ENCODE measurements at regions of chr16 and their contacts with region 1.

Region 1: DNA sequence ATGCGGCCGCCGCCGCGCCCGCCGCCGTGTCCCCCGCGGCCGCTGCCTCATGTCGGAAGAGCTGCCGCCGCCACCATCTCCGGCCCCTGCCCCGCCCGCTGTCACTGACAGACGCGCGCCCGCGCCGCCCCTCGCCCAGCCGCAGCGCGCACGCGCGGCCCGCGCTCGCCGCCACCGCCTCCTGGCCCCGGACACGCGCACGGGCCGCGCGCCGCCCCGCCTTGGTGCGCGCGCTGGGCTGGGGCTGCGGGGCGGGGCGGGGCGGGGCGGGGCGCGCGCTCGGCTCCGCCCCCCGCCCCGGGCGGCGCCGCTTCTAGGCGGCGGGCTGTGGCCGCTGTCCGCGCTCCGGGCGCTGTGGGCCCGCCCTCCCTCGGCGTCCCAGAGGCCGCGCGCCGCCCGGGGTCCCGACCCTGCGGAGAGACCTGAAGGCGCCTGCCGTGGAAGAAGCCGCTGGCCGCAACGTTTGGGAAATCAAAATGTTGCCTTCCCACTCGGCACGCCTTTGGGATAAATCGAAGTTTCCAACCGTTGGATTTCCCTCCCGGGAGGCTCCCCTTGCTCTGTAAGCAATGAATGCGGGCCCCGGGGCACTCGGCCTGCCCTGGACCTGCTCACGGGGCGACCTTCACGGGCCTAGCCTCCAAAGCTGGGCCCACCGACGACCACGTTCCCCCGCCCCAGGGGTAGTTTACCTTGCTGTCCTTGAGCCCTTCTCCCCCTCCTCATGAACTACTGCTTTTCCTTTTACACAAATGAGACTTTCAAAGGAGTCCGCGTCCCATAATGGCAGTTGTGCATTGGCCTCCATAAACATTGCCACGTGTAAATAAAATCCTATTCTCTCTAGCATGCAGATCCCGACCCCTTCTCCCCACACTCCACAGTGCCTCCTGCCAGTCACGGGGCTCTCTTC is at the start of gene ADCY9:
- DNase-seq: peak; percentile 88
- ATAC-seq: peak; percentile 86
- H3K4me3 ChIP-seq: peak within 1 kb of the TSS in 4 of 5 experiments; percentile 46 to 75 (median 58)
- H3K4me3 Mint-ChIP-seq: peak within 1 kb of the TSS; percentile 91
- H3K27ac ChIP-seq: no peak within 1 kb of the TSS
- H3K27ac Mint-ChIP-seq: peak within 1 kb of the TSS; percentile 64
- H3K4me1 ChIP-seq: peaks cover 10 to 13% of the 10 kb centered on the region in 2 donors
- H3K4me1 Mint-ChIP-seq: peaks cover 18% of the 10 kb centered on the region
- H3K27me3 ChIP-seq: peaks cover 0 to 6% (median 0%) of the 10 kb centered on the region in 4 experiments
- H3K27me3 Mint-ChIP-seq: peaks cover 22% of the 10 kb centered on the region
- CTCF ChIP-seq: no peak
- total RNA-seq, gene ADCY9: 1.7 and 1.9 TPM in 2 replicates

Region 2: GRCh38 chr16:4183237-4184036 is 66.8 kb after region 1 on chr16:
- CTCF ChIA-PET with region 1: no interaction called
- POLR2A ChIA-PET with region 1: no interaction called
- intact Hi-C with region 1: loop called (anchors 1 kb)
- DNase-seq: peak; percentile 90
- ATAC-seq: peak; percentile 95
- H3K4me3 ChIP-seq: peak overlapping the region; percentile 54 to 78 (median 69)
- H3K4me3 Mint-ChIP-seq: peak overlapping the region; percentile 84
- H3K27ac ChIP-seq: peak overlapping the region; percentile 27 to 62
- H3K27ac Mint-ChIP-seq: peak overlapping the region; percentile 59
- H3K4me1 ChIP-seq: peaks cover 4 to 15% of the 10 kb centered on the region in 2 donors
- H3K4me1 Mint-ChIP-seq: peaks cover 8% of the 10 kb centered on the region
- H3K27me3 ChIP-seq: no peaks in the 10 kb centered on the region
- H3K27me3 Mint-ChIP-seq: peaks cover 9% of the 10 kb centered on the region
- CTCF ChIP-seq: no peak

Region 3: DNA sequence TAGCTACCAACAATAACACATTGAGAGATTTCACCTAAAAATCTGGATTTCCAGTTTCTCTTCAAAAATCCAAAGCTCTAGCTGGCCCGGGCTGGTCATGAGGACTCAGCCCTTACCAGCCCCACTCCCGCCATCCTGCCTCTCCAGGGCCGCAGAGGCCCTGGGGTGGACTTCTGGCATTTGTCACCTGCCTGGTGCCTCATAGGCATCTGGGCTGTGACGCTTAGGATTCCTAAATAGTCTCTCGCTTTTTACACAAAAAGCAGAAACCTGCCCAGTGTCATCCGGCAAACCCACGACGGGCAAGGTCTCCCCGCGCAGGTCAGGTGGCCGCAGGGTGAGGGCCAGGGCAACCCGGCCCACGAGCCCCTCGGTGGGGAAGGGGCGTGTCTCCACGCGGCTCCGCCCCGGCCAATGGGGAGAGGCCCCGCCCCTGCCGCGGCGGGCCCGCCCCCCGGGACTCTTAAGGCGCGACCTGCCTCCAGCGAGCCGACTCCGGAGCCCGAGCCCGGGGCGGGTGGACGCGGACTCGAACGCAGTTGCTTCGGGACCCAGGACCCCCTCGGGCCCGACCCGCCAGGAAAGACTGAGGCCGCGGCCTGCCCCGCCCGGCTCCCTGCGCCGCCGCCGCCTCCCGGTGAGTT is 254.9 kb after region 1 on chr16 and contains the start of gene VASN:
- CTCF ChIA-PET with region 1: no interaction called
- POLR2A ChIA-PET with region 1: no interaction called
- intact Hi-C with region 1: loop called (anchors 5 kb)
- DNase-seq: peak; percentile 81
- ATAC-seq: peak; percentile 87
- H3K4me3 ChIP-seq: peak within 1 kb of the TSS in 3 of 5 experiments; percentile 38 to 60 (median 47)
- H3K4me3 Mint-ChIP-seq: peak within 1 kb of the TSS; percentile 84
- H3K27ac ChIP-seq: no peak within 1 kb of the TSS
- H3K27ac Mint-ChIP-seq: no peak within 1 kb of the TSS
- H3K4me1 ChIP-seq: peaks cover 18 to 25% of the 10 kb centered on the region in 2 donors
- H3K4me1 Mint-ChIP-seq: peaks cover 29% of the 10 kb centered on the region
- H3K27me3 ChIP-seq: no peaks in the 10 kb centered on the region
- H3K27me3 Mint-ChIP-seq: no peaks in the 10 kb centered on the region
- CTCF ChIP-seq: no peak
- total RNA-seq, gene VASN: 0.66 and 0.76 TPM in 2 replicates